Naive thymus-derived CD4-positive, alpha-beta T cell (primary cell): ENCODE measurements at regions of chr1 and their contacts with region 1.

Region 1: GRCh38 chr1:101060992-101061391 is 35.4 kb upstream of the DPH5 start:
- DNase-seq: no peak
- ATAC-seq: no peak
- H3K4me3 ChIP-seq: no peak overlapping the region
- H3K4me3 Mint-ChIP-seq: no peak overlapping the region
- H3K27ac ChIP-seq: no peak overlapping the region
- H3K27ac Mint-ChIP-seq: peak overlapping the region in 1 of 9 donors; percentile 68
- H3K4me1 ChIP-seq: peaks cover 0 to 12% of the 10 kb centered on the region in 2 donors
- H3K4me1 Mint-ChIP-seq: peaks cover 12 to 50% (median 39%) of the 10 kb centered on the region in 7 donors
- H3K27me3 ChIP-seq: no peaks in the 10 kb centered on the region
- H3K27me3 Mint-ChIP-seq: no peaks in the 10 kb centered on the region

Region 2: GRCh38 chr1:101073836-101074235 is 12.8 kb after region 1 on chr1:
- CTCF ChIA-PET with region 1: interaction called, 6 read pairs
- POLR2A ChIA-PET with region 1: interaction called, 3 read pairs
- intact Hi-C with region 1: loop called in 1 of 2 experiments (anchors 1 kb)
- DNase-seq: no peak
- ATAC-seq: no peak
- H3K4me3 ChIP-seq: no peak overlapping the region
- H3K4me3 Mint-ChIP-seq: no peak overlapping the region
- H3K27ac ChIP-seq: no peak overlapping the region
- H3K27ac Mint-ChIP-seq: no peak overlapping the region
- H3K4me1 ChIP-seq: peaks cover 0 to 13% of the 10 kb centered on the region in 2 donors
- H3K4me1 Mint-ChIP-seq: peaks cover 12 to 45% (median 31%) of the 10 kb centered on the region in 7 donors
- H3K27me3 ChIP-seq: no peaks in the 10 kb centered on the region
- H3K27me3 Mint-ChIP-seq: no peaks in the 10 kb centered on the region

Region 3: DNA sequence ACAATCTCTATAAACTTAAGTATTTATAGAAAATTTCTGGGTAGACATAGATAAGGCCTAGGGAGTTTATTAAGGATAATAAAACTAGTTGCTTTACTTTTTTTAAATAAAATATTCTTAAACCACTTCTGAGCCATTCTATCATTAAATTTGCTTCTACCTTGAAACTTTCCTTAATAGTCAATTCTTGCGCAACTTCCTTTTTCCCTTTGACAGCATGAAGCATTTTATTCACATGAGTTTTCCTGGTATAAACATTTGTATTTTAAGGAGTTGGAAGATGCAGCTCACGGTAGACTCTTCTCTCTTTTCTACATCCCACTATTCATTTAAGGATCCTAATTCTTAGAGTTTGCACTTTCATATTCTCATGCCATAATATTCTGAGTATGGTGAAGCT is 40.4 kb after region 1 on chr1:
- CTCF ChIA-PET with region 1: no interaction called
- POLR2A ChIA-PET with region 1: no interaction called
- intact Hi-C with region 1: loop called in 1 of 2 experiments (anchors 5 kb)
- DNase-seq: no peak
- ATAC-seq: no peak
- H3K4me3 ChIP-seq: no peak overlapping the region
- H3K4me3 Mint-ChIP-seq: peak overlapping the region in 1 of 10 donors; percentile 23
- H3K27ac ChIP-seq: no peak overlapping the region
- H3K27ac Mint-ChIP-seq: peak overlapping the region in 1 of 9 donors; percentile 69
- H3K4me1 ChIP-seq: no peaks in the 10 kb centered on the region
- H3K4me1 Mint-ChIP-seq: peaks cover under 1 to 12% (median 7%) of the 10 kb centered on the region in 7 donors
- H3K27me3 ChIP-seq: no peaks in the 10 kb centered on the region
- H3K27me3 Mint-ChIP-seq: no peaks in the 10 kb centered on the region